Common myeloid progenitor, CD34-positive (primary cell): ENCODE measurements at regions of chr20 and their contacts with region 1.

Region 1: DNA sequence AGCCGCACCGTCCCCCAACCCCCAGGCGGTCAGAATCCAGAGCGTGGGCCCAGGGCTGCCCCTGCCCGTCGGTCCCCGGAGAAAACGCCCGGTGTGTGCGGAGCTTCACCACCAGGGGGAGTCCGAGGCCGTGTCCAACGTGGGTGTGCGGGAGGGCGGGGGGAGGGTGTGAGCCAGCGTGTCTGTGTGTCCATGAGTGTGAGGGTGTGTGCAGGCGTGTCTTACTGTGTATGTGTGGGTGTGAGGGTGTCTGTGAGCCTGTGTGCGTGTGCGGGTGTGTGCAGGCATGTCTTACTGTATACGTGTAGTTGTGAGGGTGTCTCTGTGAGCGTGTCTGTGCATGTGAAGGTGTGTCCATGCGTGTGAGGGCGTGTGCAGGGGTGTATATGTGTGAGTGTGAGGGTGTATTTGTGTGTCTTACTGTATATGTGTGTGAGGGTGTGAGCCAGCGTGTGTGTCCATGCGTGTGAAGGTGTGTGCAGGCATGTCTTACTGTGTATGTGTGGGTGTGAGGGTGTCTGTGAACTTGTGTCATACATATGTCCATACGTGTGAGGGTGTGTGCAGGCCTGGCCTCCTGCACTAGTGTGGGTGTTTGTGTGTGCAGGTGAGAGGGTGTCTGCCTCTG is 24.6 kb upstream of the GATA5 start:
- DNase-seq: peak; percentile 67 to 80 (median 77)
- H3K4me3 ChIP-seq: no peak overlapping the region
- H3K27ac ChIP-seq: no peak overlapping the region
- H3K4me1 ChIP-seq: peaks cover 0 to 33% (median 21%) of the 10 kb centered on the region in 4 experiments
- H3K27me3 ChIP-seq: peaks cover 0 to 5% (median 0%) of the 10 kb centered on the region in 5 experiments

Region 2: DNA sequence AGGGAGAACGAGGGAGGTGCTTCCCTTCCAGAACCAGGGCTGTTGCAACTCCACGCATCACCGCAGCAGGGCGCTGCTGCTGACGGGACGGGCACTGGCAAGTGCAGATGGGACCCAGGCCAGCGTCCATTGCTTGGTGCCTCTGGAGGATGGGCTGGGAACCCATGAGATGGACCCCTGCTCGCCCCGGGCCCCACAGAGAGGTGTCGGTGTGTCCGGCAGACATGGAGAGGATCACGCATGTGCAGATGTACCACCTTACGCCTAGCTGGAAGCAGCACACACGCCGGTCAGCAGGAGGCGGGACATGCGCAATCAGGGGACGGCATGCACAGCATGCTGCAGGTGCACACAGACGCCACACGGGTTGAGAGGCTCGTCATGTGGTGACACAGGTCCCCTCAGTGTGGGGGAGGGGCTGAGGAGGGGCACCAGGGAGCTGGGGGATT is 99.0 kb before region 1 on chr20:
- CTCF ChIA-PET with region 1: no interaction called
- POLR2A ChIA-PET with region 1: no interaction called
- DNase-seq: no peak
- H3K4me3 ChIP-seq: no peak overlapping the region
- H3K27ac ChIP-seq: no peak overlapping the region
- H3K4me1 ChIP-seq: peaks cover 0 to 14% (median 10%) of the 10 kb centered on the region in 4 experiments
- H3K27me3 ChIP-seq: no peaks in the 10 kb centered on the region

Region 3: GRCh38 chr20:62477669-62478455 is 22.5 kb before region 1 on chr20:
- CTCF ChIA-PET with region 1: interaction called, 16 read pairs
- POLR2A ChIA-PET with region 1: no interaction called
- DNase-seq: no peak
- H3K4me3 ChIP-seq: no peak overlapping the region
- H3K27ac ChIP-seq: no peak overlapping the region
- H3K4me1 ChIP-seq: peaks cover 0 to 46% (median 36%) of the 10 kb centered on the region in 4 experiments
- H3K27me3 ChIP-seq: peaks cover 4 to 92% (median 41%) of the 10 kb centered on the region in 5 experiments

Region 4: DNA sequence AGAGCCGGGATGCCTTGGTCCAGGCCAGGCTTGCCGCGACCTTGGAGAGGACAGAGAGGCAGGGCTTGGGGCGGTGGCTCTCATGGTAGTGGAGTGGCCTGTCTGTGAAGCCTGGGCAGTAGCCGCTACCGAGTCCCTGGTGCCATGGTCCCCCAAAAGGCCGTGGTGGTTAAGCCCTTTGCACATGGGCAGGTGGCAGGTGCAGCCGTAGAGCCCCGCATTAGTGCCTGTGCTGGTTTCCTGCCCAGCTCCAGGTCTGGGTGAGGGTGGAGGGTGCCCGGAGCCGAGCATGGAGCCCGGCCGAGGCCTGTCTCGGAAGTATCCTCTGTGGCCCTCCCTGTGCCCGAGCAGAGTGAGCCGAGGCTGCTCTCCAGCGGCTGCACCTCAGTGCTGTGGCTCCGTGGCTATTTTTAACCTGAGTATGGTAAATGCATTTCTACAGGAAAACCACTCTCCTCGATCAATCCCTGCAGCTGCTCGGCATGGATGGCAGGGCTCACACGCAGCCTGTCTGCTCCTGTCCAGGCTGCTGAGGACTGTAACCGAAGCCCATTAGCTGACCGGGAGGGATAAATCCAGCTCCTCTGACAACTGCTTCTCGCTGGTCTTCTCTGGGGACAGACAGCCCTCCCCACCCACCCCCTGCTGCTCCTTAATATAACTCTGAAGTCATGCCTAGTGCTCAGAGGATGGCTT is 11.7 kb after region 1 on chr20:
- CTCF ChIA-PET with region 1: interaction called, 14 read pairs
- POLR2A ChIA-PET with region 1: no interaction called
- DNase-seq: peak in 2 of 3 donors; percentile 58 to 62
- H3K4me3 ChIP-seq: peak overlapping the region in 3 of 7 experiments; percentile 13 to 26 (median 24)
- H3K27ac ChIP-seq: no peak overlapping the region
- H3K4me1 ChIP-seq: peaks cover 3 to 38% (median 34%) of the 10 kb centered on the region in 4 experiments
- H3K27me3 ChIP-seq: no peaks in the 10 kb centered on the region